Activated naive CD4-positive, alpha-beta T cell treated with anti-CD3 and anti-CD28 coated beads, Interleukin-2, amount 10 ng/mL, durations not matched to agents 7 days and 5 days (primary cell): ENCODE measurements at regions of chr10 and their contacts with region 1.

Region 1: GRCh38 chr10:86389441-86390193 is 23.0 kb upstream of the GRID1 start:
- DNase-seq: no peak
- H3K4me3 Mint-ChIP-seq: peak overlapping the region; percentile 64
- H3K27ac Mint-ChIP-seq: no peak overlapping the region
- H3K4me1 Mint-ChIP-seq: peaks cover 3% of the 10 kb centered on the region
- H3K27me3 Mint-ChIP-seq: peaks cover 73% of the 10 kb centered on the region

Region 2: DNA sequence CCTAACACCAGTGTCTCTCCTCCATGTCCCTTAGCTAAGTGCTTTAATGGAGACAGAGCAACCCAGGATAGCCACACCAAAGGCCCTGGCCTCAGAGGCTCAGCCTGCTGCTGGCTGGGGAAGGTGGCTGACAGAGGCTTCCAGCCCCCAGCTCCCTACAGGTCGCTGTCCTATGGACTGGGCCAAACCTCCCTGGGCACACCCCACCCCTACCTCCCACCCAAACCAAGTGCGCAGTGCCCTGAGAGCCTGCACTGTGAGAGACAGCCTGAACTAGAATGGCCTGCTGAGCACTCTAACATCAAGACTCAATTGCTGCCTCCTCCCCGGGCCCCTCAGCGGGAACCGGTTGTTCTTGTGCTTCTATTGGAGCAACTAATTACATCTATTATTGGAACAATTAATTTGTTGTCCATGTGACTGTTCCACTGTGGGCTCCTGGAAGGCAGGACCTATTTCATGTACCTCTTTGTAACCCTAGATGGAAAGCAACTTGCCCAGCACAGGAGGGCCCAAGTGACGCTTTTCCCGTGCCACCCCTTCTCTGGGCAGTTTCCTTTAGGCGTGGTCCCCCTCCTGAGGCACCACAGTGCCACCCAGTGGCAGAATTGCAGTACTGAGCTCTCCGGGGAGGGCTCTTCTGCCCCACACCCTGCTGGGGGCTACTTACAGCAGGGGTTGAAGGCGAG is 195.6 kb after region 1 on chr10:
- CTCF ChIA-PET with region 1: interaction called, 17 read pairs
- DNase-seq: peak; percentile 79
- H3K4me3 Mint-ChIP-seq: no peak overlapping the region
- H3K27ac Mint-ChIP-seq: no peak overlapping the region
- H3K4me1 Mint-ChIP-seq: peaks cover 3% of the 10 kb centered on the region
- H3K27me3 Mint-ChIP-seq: peaks cover 18% of the 10 kb centered on the region